HEK293 (cell line): ENCODE measurements at regions of chrX and their contacts with region 1.

Region 1: DNA sequence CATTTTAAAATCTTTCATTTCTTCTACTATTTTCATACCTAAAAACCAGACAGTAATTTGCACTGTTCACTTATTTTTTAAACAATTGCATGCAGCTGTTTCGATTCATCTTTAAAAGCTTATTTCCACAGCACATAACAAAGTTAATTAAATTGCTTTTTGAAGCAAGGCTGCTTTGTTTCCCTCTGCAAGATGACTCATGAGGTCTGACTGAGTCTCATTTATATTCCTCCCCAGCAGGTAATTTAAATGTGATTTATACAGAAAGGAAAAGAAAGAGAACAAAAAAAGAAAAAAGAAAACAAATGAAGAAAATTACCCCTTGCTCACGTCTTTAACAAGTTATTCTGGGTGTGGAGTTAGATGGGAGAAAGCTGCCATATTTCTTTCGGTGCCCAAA is 22.8 kb downstream of the VMA21 start:
- H3K4me3 ChIP-seq: no peak overlapping the region
- H3K27ac ChIP-seq: no peak overlapping the region
- H3K4me1 ChIP-seq: no peaks in the 10 kb centered on the region
- CTCF ChIP-seq: no peak

Region 2: DNA sequence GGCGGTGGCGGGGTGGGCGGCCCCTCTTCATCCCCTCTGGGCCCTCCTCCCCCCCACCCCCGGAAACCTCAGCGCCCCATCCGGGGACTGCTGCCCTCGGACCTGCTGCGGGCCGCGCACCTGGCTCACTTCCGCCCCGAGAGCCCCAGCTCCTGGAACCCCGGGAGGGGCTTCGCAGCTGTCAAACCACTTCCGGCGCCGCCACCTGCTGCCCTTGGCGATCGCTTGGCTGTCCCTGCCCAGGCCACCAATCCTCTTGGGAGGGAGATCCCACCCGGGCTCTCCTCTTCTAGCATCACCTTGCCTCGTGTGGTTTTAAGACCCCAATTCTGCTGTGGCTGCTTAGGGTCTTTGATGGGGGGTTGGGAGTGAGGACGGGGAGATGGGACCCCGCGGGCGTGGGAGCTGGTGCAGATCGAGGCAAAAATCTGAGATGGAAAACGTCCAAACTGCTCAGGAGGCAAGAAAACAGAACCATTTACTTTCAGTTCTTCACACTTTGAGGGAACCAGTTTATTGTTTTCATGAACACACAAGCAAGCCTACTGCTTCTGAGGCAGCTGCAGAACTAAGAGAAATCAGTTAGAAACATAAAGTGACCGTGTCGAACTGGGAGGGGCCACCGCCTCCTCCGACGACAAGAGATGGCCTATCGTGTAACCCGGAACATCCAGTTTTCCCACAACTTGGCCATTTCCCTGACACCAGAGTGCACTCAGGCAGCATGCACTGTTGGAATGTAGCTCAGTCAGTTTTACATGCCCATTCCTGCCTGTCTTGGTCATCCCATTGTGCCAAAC is 725.8 kb before region 1 on chrX:
- CTCF ChIA-PET with region 1: no interaction called
- POLR2A ChIA-PET with region 1: interaction called, 14 read pairs
- H3K4me3 ChIP-seq: peak overlapping the region; percentile 35
- H3K27ac ChIP-seq: peak overlapping the region; percentile 75; the same call in 1 of the 2 replicates
- H3K4me1 ChIP-seq: no peaks in the 10 kb centered on the region; the same call in 1 of the 2 replicates
- CTCF ChIP-seq: no peak

Region 3: DNA sequence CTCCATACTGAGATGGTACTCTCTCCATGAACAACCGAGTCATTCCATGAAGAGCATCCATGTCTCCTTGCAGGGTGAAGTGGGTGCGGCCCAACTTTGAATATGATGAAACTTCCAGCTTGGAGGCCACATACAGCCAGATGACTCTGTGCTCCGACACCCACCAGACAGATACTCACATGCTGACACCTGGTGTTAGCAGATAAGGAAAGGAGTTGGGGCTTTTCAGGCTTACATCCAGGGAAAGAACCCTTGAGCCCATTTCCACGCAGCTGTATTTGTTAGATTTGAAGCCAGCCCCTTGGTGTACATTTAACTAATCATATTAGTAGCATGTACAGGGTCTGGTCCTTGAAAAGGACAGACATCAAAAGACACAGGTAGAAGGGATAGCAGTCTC is 213.4 kb after region 1 on chrX:
- CTCF ChIA-PET with region 1: no interaction called
- POLR2A ChIA-PET with region 1: no interaction called
- H3K4me3 ChIP-seq: no peak overlapping the region
- H3K27ac ChIP-seq: no peak overlapping the region
- H3K4me1 ChIP-seq: no peaks in the 10 kb centered on the region
- CTCF ChIP-seq: no peak